SK-N-SH (cell line): ENCODE measurements at regions of chr1 and their contacts with region 1.

Region 1: DNA sequence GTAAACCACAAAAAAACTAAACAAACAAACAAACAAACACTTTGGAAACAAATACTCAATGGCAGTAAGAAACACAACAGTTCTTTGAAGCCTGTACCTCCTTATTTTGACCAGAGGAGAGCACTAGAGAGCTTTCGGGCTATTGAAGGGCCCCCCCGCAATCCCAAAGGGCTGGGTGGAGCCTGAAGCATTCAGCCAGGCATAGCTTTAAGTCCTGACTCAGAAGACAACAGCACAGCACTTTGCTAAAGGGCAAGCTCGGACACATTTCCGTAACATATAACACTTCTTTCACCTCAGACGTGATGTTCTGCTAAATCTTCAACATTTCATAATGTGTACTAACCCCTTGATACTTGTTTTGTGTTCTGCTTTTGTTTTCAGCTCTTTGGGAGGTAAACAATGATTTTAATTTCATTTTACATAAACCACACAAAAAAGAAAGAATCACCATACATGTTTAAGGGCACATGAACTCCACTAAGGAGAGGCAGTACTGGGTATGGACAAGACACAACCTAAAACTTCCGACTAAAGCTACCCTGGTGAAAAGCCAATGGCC is 9.7 kb upstream of the SHCBP1L start:
- DNase-seq: peak; percentile 88
- H3K4me3 ChIP-seq: peak overlapping the region; percentile 14 to 31; a peak in 2 of 4 replicates
- H3K27ac ChIP-seq: peak overlapping the region; percentile 65 to 91
- H3K4me1 ChIP-seq: no peaks in the 10 kb centered on the region; a peak in 1 of 4 replicates
- H3K27me3 ChIP-seq: no peaks in the 10 kb centered on the region
- CTCF ChIP-seq: peak; percentile 98
- EP300 ChIP-seq: no peak
- RAD21 ChIP-seq: peak; percentile 99

Region 2: GRCh38 chr1:182707122-182707521 is 255.5 kb before region 1 on chr1:
- CTCF ChIA-PET with region 1: no interaction called
- POLR2A ChIA-PET with region 1: no interaction called
- DNase-seq: no peak
- H3K4me3 ChIP-seq: no peak overlapping the region
- H3K27ac ChIP-seq: no peak overlapping the region
- H3K4me1 ChIP-seq: peaks cover 0 to 25% of the 10 kb centered on the region in 2 experiments; a peak in 2 of 4 replicates
- H3K27me3 ChIP-seq: no peaks in the 10 kb centered on the region; the same call in 1 of the 2 replicates
- CTCF ChIP-seq: no peak
- EP300 ChIP-seq: no peak
- RAD21 ChIP-seq: no peak

Region 3: DNA sequence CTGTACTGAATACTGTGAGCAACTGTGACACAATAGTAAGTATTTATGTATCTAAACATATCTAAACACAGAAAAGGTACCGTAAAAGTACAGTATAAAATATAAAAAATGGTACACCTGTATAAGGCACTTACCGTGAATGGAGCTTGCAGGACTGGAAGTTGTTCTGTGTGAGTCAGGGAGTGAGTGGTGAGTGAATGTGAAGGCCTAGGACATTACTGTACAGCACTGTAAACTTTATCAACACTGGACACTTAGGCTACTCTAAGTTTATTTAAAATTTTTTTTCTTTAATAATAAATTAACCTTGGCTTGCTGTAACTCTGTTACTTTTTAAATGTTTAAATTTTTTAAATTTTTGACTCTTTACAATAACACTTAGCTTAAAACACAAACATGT is 14.8 kb after region 1 on chr1:
- CTCF ChIA-PET with region 1: interaction called, 10 read pairs
- POLR2A ChIA-PET with region 1: no interaction called
- DNase-seq: no peak
- H3K4me3 ChIP-seq: no peak overlapping the region
- H3K27ac ChIP-seq: no peak overlapping the region
- H3K4me1 ChIP-seq: no peaks in the 10 kb centered on the region
- H3K27me3 ChIP-seq: no peaks in the 10 kb centered on the region
- CTCF ChIP-seq: no peak
- EP300 ChIP-seq: no peak
- RAD21 ChIP-seq: no peak

Region 4: GRCh38 chr1:183023601-183024316 is 61.1 kb after region 1 on chr1:
- CTCF ChIA-PET with region 1: interaction called, 21 read pairs
- POLR2A ChIA-PET with region 1: no interaction called
- DNase-seq: peak; percentile 81
- H3K4me3 ChIP-seq: peak overlapping the region; percentile 70 to 97
- H3K27ac ChIP-seq: peak overlapping the region; percentile 89 to 100
- H3K4me1 ChIP-seq: peaks cover 34 to 39% of the 10 kb centered on the region in 2 experiments
- H3K27me3 ChIP-seq: no peaks in the 10 kb centered on the region
- CTCF ChIP-seq: peak; percentile 59
- EP300 ChIP-seq: no peak
- RAD21 ChIP-seq: peak; percentile 38

Region 5: DNA sequence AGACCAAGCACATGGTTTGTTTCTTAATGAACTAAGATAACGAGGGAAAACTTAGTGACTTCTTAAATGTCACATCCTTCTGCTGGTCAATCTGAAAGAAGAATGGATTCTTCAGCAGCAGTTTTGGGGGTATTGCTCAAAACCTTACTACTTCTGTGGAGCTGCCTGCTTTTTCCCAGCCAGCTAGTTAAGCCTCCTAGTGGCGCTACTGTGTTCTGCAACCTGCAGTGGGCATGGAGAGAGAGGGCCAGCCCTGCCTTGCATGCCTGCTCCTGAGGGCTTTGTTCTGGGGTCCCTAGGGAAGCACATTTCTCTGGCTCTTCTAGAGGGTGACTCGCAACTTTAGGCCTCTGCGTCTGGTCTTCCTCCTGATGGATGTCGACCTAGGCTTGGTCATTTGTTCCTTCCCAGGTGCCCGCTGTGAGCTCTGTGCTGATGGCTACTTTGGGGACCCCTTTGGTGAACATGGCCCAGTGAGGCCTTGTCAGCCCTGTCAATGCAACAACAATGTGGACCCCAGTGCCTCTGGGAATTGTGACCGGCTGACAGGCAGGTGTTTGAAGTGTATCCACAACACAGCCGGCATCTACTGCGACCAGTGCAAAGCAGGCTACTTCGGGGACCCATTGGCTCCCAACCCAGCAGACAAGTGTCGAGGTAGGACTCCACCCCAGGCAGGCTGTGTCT is 265.5 kb after region 1 on chr1:
- CTCF ChIA-PET with region 1: interaction called, 59 read pairs
- POLR2A ChIA-PET with region 1: no interaction called
- DNase-seq: peak; percentile 66
- H3K4me3 ChIP-seq: no peak overlapping the region
- H3K27ac ChIP-seq: no peak overlapping the region
- H3K4me1 ChIP-seq: peaks cover 0 to 2% of the 10 kb centered on the region in 2 experiments; a peak in 1 of 4 replicates
- H3K27me3 ChIP-seq: no peaks in the 10 kb centered on the region
- CTCF ChIP-seq: peak; percentile 79
- EP300 ChIP-seq: no peak
- RAD21 ChIP-seq: peak; percentile 73

Region 6: GRCh38 chr1:183234660-183235476 is 272.2 kb after region 1 on chr1:
- CTCF ChIA-PET with region 1: interaction called, 59 read pairs
- POLR2A ChIA-PET with region 1: no interaction called
- DNase-seq: peak; percentile 27
- H3K4me3 ChIP-seq: peak overlapping the region; percentile 44 to 63
- H3K27ac ChIP-seq: peak overlapping the region; percentile 86 to 98
- H3K4me1 ChIP-seq: peaks cover 6 to 23% of the 10 kb centered on the region in 2 experiments; a peak in 2 of 4 replicates
- H3K27me3 ChIP-seq: no peaks in the 10 kb centered on the region
- CTCF ChIP-seq: peak; percentile 90
- EP300 ChIP-seq: peak in 1 of 2 experiments; percentile 61; a peak in 1 of 4 replicates
- RAD21 ChIP-seq: no peak; the same call in 1 of the 2 replicates